ENCODE measurements at regions of chr12 and their contacts with region 1.

Region 1: GRCh38 chr12:11739980-11740577 is 90.6 kb downstream of the ETV6 start:
- DNase-seq: no peak
- ATAC-seq: peak; percentile 62
- H3K4me3 ChIP-seq: no peak overlapping the region
- H3K27ac ChIP-seq: peak overlapping the region; percentile 81
- H3K4me1 ChIP-seq: peaks cover 63% of the 10 kb centered on the region
- H3K27me3 ChIP-seq: no peaks in the 10 kb centered on the region
- CTCF ChIP-seq: no peak
- EP300 ChIP-seq: peak in 1 of 2 experiments; percentile 71; a peak in 1 of 4 replicates
- POLR2A ChIP-seq: no peak
- RAD21 ChIP-seq: no peak

Region 2: DNA sequence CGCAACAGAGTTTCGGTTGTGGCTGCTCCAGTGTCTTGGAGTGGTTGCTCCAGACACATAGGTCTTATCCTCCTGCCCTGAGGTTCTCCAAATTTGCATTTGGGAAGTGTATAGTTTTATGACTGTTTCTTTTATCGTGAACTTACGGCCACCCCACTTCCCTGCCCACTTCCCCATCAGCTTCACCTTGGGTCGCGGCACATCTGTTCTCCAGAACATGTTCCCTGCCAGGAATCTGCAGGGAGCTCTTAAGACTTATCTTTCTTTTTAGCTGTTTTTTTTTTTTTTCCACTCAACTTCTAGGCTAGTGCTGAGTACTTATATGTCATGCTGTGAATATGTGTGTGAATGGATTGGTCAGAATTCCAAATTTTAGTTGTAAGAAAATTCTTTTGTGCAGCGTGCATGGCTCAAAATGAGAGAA is 15.2 kb before region 1 on chr12:
- CTCF ChIA-PET with region 1: interaction called, 47 read pairs
- POLR2A ChIA-PET with region 1: interaction called, 44 read pairs
- RAD21 ChIA-PET with region 1: interaction called, 62 read pairs
- SMC1A ChIA-PET with region 1: interaction called, 433 read pairs
- in situ Hi-C with region 1: no loop called
- intact Hi-C with region 1: no loop called
- DNase-seq: no peak
- ATAC-seq: no peak
- H3K4me3 ChIP-seq: peak overlapping the region; percentile 8; the same call in 1 of the 2 replicates
- H3K27ac ChIP-seq: peak overlapping the region; percentile 89
- H3K4me1 ChIP-seq: peaks cover 98% of the 10 kb centered on the region
- H3K27me3 ChIP-seq: no peaks in the 10 kb centered on the region
- CTCF ChIP-seq: no peak
- EP300 ChIP-seq: no peak
- POLR2A ChIP-seq: no peak
- RAD21 ChIP-seq: no peak